ENCODE measurements at regions of chr12 and their contacts with region 1.

Region 1: DNA sequence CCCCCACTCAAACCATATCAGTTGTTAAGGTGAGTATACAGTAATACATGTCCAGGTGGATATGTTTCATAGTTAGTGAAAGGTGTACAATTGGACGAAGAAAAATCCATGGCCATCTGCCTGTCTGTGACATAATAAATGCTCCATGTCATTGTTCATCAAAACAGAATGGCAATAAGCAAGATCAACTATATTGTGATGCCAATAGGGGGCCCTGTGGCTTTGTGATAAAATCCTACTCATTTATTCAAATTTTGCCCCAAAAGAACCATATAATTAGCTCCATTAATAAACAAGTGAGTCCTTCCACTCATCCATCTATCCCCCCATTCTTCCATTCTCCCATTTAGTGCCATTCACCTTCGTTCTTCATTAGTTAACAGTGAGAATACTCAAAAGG is 102.0 kb downstream of the MGST1 start:
- DNase-seq: no peak
- ATAC-seq: no peak
- H3K4me3 ChIP-seq: no peak overlapping the region
- H3K27ac ChIP-seq: no peak overlapping the region
- H3K4me1 ChIP-seq: no peaks in the 10 kb centered on the region
- H3K27me3 ChIP-seq: no peaks in the 10 kb centered on the region; a peak in 1 of 4 replicates
- CTCF ChIP-seq: no peak; a peak in 1 of 6 replicates
- EP300 ChIP-seq: no peak
- POLR2A ChIP-seq: no peak
- RAD21 ChIP-seq: no peak

Region 2: GRCh38 chr12:16467272-16467671 is 17.8 kb after region 1 on chr12:
- CTCF ChIA-PET with region 1: interaction called, 3 read pairs
- POLR2A ChIA-PET with region 1: interaction called, 3 read pairs
- RAD21 ChIA-PET with region 1: interaction called, 11 read pairs
- SMC1A ChIA-PET with region 1: no interaction called
- in situ Hi-C with region 1: no loop called
- intact Hi-C with region 1: no loop called
- DNase-seq: no peak
- ATAC-seq: peak; percentile 67
- H3K4me3 ChIP-seq: no peak overlapping the region
- H3K27ac ChIP-seq: no peak overlapping the region
- H3K4me1 ChIP-seq: no peaks in the 10 kb centered on the region
- H3K27me3 ChIP-seq: no peaks in the 10 kb centered on the region
- CTCF ChIP-seq: no peak
- EP300 ChIP-seq: no peak
- POLR2A ChIP-seq: no peak
- RAD21 ChIP-seq: no peak

Region 3: GRCh38 chr12:16530268-16530850 is 80.9 kb after region 1 on chr12:
- CTCF ChIA-PET with region 1: no interaction called
- POLR2A ChIA-PET with region 1: no interaction called
- RAD21 ChIA-PET with region 1: no interaction called
- SMC1A ChIA-PET with region 1: no interaction called
- in situ Hi-C with region 1: no loop called
- intact Hi-C with region 1: no loop called
- DNase-seq: no peak
- ATAC-seq: no peak
- H3K4me3 ChIP-seq: no peak overlapping the region
- H3K27ac ChIP-seq: no peak overlapping the region
- H3K4me1 ChIP-seq: no peaks in the 10 kb centered on the region
- H3K27me3 ChIP-seq: no peaks in the 10 kb centered on the region
- CTCF ChIP-seq: no peak
- EP300 ChIP-seq: no peak
- POLR2A ChIP-seq: no peak
- RAD21 ChIP-seq: no peak

Measured in GM12878 (cell line).